GM10248 (cell line): ENCODE measurements at regions of chr2 and their contacts with region 1.

Region 1: DNA sequence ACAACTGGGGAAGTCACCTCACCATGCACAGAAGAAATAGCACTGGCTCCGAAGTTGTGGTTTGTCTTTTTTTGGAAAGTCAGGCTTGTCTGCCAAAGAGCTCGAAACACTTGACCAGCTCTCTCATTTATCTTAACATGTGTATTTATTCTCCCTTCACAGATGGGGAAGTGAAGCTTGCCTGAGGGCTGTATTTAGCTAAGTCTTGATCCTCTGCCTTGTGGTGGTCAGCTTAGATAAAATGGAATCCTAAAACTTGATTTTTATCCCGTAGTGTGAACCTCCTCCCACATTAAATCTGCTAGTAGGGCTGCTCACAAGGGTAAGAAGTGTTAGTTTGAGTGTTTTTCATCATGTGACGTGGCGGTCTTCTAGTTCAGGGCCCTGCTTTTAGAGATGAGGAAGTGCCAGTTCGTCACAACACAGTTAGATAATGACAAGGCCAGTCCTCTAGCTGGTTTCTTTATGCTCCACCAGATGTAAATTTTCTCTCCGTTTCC is 89.7 kb downstream of the TMEM247 start:
- DNase-seq: peak; percentile 53
- CTCF ChIP-seq: no peak

Region 2: DNA sequence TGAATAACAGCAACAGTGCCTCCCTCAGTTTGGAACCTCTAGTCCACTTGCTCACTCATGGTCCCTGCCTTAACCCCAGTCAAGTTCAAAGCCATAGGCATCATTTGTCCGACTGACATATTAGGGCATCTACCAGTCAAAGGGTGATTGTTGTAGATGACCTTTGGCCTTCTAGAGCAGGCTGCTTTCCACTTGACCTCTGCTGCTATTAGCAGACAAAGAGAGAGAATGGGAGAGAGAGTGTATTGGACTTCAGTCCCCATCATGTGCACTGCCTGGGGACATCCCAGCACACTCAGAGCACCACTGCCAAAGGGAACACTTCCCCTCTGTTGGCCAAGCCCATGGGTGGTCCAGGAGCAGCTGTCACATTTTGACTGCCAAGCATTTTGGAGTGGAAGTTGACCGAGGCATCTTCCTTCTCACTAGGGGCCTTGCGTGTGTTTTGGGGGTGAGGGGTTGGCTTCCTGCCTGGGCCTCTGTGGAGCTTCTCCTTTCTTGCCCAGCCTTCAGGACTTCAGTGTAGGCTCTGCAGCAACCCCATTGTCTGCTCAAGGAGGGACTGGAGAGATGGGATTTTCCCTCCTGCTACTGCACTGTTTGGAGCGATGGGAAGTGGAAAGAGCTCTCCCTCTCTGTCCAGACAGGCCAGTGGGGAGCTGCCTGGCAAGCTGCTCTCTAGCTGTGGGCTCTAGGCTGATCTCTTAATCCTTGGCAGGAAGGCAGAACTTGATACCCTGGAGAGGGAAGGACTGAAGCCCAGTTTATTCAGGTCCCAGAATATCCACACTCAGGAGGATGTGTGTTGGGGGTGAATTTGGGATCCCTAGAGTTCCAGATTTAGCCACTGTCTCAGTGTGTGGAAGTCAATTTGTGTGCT is 21.6 kb before region 1 on chr2:
- CTCF ChIA-PET with region 1: interaction called, 6 read pairs
- POLR2A ChIA-PET with region 1: interaction called, 17 read pairs
- DNase-seq: no peak
- CTCF ChIP-seq: no peak

Region 3: GRCh38 chr2:46555011-46555410 is 14.1 kb before region 1 on chr2:
- CTCF ChIA-PET with region 1: interaction called, 25 read pairs
- POLR2A ChIA-PET with region 1: interaction called, 8 read pairs
- DNase-seq: no peak
- CTCF ChIP-seq: peak; percentile 45

Region 4: GRCh38 chr2:46580416-46580815 is 11.3 kb after region 1 on chr2:
- CTCF ChIA-PET with region 1: interaction called, 13 read pairs
- POLR2A ChIA-PET with region 1: interaction called, 4 read pairs
- DNase-seq: no peak
- CTCF ChIP-seq: no peak

Region 5: GRCh38 chr2:46679761-46680160 is 110.7 kb after region 1 on chr2:
- CTCF ChIA-PET with region 1: no interaction called
- POLR2A ChIA-PET with region 1: no interaction called
- DNase-seq: no peak
- CTCF ChIP-seq: no peak